IMR-90 (cell line): ENCODE measurements at regions of chr9 and their contacts with region 1.

Region 1: DNA sequence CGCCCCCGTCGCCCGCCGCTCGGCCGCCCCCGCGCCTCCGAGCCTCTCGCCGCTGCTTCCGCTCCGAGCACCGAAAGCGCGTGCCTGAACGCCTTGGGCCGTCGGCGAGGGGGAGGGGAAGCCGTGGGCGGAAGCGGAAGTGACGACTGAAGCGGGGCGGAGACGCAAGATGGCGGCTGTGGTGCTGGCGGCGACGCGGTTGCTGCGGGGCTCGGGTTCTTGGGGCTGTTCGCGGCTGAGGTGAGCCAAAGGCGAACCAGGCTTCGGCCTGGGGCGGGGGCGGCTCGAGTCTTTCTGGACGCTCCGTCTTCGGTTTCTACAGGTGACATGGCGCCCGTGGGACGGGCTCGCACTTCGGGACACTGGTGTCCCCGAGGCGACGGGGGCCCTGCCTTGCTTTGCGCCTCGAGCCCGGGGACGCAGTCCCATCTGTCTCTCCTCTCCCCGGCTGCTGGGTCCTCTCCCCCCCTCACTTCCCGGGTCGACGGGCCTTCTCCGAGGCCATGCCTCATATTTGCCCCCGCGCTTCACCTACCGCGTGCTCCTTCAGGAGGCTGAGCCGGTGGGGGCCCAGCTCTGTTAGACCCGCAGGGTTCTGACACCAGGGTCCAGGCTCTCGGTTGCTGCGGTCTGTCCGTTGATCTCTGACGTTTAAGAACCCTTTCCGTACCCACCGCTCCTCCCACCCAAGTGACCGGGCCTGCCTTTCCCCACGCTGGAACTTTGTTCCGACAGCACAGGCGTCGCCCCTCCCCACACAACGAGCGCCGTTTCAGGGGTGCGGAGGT is at the starts of genes ENTR1 and PMPCA:
- DNase-seq: peak; percentile 85
- ATAC-seq: peak; percentile 79
- H3K4me3 ChIP-seq: peak within 1 kb of the TSS; percentile 88
- H3K27ac ChIP-seq: peak within 1 kb of the TSS; percentile 85
- H3K4me1 ChIP-seq: peaks cover 12% of the 10 kb centered on the region
- H3K27me3 ChIP-seq: no peaks in the 10 kb centered on the region
- CTCF ChIP-seq: no peak
- POLR2A ChIP-seq: peak; percentile 92
- RAD21 ChIP-seq: no peak
- total RNA-seq, gene ENTR1: 14.5 and 17.2 TPM in 2 replicates
- total RNA-seq, gene PMPCA: 62.6 and 86.7 TPM in 2 replicates

Region 2: DNA sequence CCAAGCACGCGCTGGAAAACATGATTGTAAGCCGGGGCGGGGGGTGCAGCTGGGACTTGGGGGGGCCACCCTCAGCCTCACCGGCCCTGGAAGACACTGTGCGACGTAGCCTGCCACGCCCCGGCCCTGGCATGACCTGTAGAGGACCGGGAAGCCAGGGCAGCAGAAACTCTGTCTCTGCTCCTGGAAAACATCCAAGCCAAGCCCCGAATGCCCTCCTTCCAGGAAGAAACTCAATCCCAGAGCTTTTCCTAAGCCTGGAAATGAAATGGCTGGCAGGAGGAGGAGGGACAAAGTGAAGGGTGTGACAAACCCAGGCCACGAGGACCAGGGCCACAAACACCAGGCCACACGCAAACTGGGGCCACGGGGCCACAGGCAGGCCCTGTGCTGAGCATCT is 653.3 kb before region 1 on chr9:
- CTCF ChIA-PET with region 1: no interaction called
- POLR2A ChIA-PET with region 1: no interaction called
- dilution Hi-C with region 1: no loop called
- in situ Hi-C with region 1: no loop called
- intact Hi-C with region 1: no loop called
- DNase-seq: no peak
- ATAC-seq: no peak
- H3K4me3 ChIP-seq: no peak overlapping the region
- H3K27ac ChIP-seq: no peak overlapping the region
- H3K4me1 ChIP-seq: no peaks in the 10 kb centered on the region
- H3K27me3 ChIP-seq: peaks cover 2% of the 10 kb centered on the region; the same call in 1 of the 2 replicates
- CTCF ChIP-seq: no peak
- POLR2A ChIP-seq: no peak
- RAD21 ChIP-seq: no peak

Region 3: DNA sequence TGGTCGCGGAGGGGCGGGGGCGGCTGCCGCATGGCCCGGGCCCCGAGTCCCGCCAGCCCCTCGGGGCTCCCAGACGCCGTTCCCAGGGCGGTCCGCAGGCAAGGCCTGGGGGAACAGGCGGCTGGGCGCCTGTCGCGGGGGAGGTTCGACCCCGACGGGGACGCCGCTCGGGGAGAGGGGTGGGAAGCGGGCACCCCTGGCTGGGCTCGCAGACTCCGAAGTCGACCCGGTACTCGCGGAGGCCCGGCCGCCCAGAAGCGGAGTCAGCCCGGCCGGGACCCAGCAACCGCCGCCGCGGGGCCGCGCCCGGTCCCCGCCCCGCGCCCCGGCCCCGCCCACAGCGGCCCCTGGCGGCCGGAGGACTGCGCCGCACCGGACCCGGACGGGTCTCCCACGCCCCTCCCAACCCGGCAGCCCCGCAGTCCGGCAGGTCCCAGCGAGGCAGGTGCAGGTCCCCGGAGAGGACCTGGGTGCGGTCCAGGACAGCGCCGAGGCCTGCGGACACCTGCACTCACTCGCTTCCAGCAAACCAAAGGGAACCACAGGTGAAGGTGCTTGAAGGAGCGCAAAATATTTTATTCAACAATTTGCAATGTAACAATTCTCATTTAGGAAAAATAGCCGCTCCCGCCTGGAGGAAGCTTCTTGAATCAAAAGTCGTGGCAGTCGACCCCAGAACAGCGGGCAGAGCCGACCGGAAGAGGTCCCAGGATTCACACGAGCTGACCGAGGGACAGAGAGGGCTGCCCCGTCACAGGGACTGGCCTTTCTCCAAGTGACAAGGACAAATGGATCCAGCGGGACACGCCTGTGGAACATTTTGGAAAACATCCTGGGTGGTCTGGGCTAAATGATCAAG is 29.1 kb after region 1 on chr9 and contains the start of gene INPP5E:
- CTCF ChIA-PET with region 1: no interaction called
- POLR2A ChIA-PET with region 1: no interaction called
- dilution Hi-C with region 1: no loop called
- in situ Hi-C with region 1: no loop called
- intact Hi-C with region 1: loop called (anchors 1 kb)
- DNase-seq: peak; percentile 56
- ATAC-seq: peak; percentile 83
- H3K4me3 ChIP-seq: peak within 1 kb of the TSS; percentile 90
- H3K27ac ChIP-seq: peak within 1 kb of the TSS; percentile 73
- H3K4me1 ChIP-seq: peaks cover 7% of the 10 kb centered on the region
- H3K27me3 ChIP-seq: no peaks in the 10 kb centered on the region
- CTCF ChIP-seq: peak; percentile 67
- POLR2A ChIP-seq: peak; percentile 62; the same call in 1 of the 2 replicates
- RAD21 ChIP-seq: no peak
- total RNA-seq, gene INPP5E: 1.6 and 1.9 TPM in 2 replicates

Region 4: DNA sequence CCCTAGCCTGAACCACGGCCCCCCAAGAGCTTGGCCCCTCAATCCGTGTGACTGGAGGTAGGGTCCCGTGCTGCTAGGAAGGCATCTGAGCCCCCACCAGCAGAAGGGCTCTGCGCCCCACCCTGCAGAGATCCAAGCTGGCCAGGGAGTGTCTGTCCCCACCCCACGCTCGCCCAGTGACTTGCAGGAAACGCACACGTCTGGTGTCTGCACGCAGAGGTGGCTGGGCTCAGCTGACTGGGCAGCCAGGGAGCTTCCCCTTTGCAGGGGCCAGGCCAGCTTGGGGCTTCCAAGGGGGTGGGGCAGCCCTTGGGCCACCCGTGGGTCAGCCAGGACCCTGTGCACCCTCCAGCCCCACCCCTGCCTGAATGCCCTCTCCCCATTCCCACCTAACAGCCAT is 110.8 kb after region 1 on chr9:
- CTCF ChIA-PET with region 1: no interaction called
- POLR2A ChIA-PET with region 1: no interaction called
- dilution Hi-C with region 1: no loop called
- in situ Hi-C with region 1: no loop called
- intact Hi-C with region 1: no loop called
- DNase-seq: no peak
- ATAC-seq: no peak
- H3K4me3 ChIP-seq: no peak overlapping the region
- H3K27ac ChIP-seq: no peak overlapping the region
- H3K4me1 ChIP-seq: no peaks in the 10 kb centered on the region; the same call in 1 of the 2 replicates
- H3K27me3 ChIP-seq: no peaks in the 10 kb centered on the region
- CTCF ChIP-seq: no peak
- POLR2A ChIP-seq: no peak
- RAD21 ChIP-seq: no peak

Region 5: GRCh38 chr9:136614372-136614922 is 203.8 kb after region 1 on chr9:
- CTCF ChIA-PET with region 1: no interaction called
- POLR2A ChIA-PET with region 1: no interaction called
- dilution Hi-C with region 1: no loop called
- in situ Hi-C with region 1: no loop called
- intact Hi-C with region 1: no loop called
- DNase-seq: peak; percentile 89
- ATAC-seq: peak; percentile 94
- H3K4me3 ChIP-seq: no peak overlapping the region
- H3K27ac ChIP-seq: peak overlapping the region; percentile 32
- H3K4me1 ChIP-seq: peaks cover 18% of the 10 kb centered on the region
- H3K27me3 ChIP-seq: no peaks in the 10 kb centered on the region; the same call in 1 of the 2 replicates
- CTCF ChIP-seq: no peak
- POLR2A ChIP-seq: no peak
- RAD21 ChIP-seq: no peak; the same call in 1 of the 2 replicates